H1 (cell line): ENCODE measurements at regions of chr3 and their contacts with region 1.

Region 1: DNA sequence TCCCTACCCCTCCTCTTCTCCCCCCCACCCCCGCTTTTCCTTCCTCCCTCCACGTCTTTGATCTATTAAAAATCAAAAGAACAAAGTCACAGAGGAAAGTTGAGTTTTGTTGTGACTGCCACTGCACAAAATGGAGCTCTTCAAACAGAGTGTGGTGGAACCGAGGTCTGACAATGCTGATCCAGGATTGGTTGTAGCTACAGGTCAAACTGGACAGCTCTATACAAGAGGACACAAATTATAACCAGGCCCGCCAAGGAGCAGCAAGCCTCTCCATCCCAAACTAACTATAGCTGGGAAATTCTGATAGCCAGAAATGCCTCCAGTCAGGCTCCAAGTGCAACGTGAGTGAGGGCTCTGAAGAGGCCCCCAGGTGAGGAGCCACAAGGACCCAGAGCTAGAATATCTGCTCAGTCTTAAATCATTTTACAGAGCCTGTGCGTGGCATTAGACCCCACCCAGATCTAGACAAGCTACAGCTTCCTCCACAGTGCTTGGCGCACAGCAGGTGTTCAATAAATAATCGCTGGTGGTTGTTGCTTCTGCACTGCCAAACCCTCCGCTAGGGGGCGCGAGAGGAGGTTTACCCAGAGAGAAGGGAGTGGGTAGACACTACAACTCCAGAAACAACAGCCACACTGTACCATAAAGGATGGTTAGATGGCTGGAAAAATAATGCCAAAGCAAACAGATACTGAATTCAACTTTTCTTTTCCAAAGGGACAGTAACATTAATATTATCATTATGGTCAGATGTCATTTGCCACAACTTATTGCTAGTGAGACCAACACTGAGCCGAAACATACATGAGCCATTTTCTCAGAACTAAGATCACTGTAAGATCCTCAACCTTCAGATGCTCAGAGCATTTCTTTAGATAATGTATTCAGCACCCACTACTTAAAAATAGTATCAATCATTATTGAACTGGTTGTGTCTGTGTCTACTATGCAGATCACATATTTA is 44.6 kb downstream of the ZIC4 start:
- DNase-seq: peak in 1 of 2 experiments; percentile 99
- H3K4me3 ChIP-seq: peak overlapping the region in 2 of 4 experiments; percentile 14 to 48; a peak in 4 of 8 replicates
- H3K27ac ChIP-seq: no peak overlapping the region
- H3K4me1 ChIP-seq: peaks cover 10 to 25% (median 14%) of the 10 kb centered on the region in 4 experiments
- H3K27me3 ChIP-seq: peaks cover 44 to 75% (median 71%) of the 10 kb centered on the region in 4 experiments
- CTCF ChIP-seq: peak; percentile 78 to 88 (median 82)
- EP300 ChIP-seq: no peak
- POLR2A ChIP-seq: no peak
- RAD21 ChIP-seq: peak; percentile 64 to 65

Region 2: DNA sequence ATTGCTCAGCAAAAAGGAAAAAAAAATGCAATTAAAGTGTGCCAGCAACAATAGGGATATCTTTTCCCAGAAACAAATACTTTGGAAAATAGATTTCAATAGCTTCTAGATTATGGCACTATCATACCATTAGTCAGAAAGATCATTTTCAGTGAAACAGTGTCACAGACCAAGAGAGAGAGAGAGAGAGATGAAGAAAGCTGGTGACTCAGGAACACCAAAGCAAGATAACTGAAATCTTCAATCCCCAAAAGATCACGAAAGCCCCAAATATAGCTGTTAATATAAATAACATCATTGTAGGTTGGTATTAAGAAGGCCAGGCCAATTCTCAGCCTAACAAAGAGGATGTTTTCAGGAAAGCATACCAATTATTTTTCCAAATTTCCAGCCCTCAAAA is 12.8 kb before region 1 on chr3:
- CTCF ChIA-PET with region 1: interaction called, 14 read pairs
- POLR2A ChIA-PET with region 1: interaction called, 3 read pairs
- DNase-seq: no peak
- H3K4me3 ChIP-seq: no peak overlapping the region
- H3K27ac ChIP-seq: no peak overlapping the region
- H3K4me1 ChIP-seq: no peaks in the 10 kb centered on the region
- H3K27me3 ChIP-seq: no peaks in the 10 kb centered on the region; a peak in 2 of 7 replicates
- CTCF ChIP-seq: no peak
- EP300 ChIP-seq: no peak
- POLR2A ChIP-seq: no peak
- RAD21 ChIP-seq: no peak

Region 3: GRCh38 chr3:147383617-147384016 is 21.9 kb after region 1 on chr3:
- CTCF ChIA-PET with region 1: interaction called, 162 read pairs
- POLR2A ChIA-PET with region 1: interaction called, 3 read pairs
- DNase-seq: peak in 1 of 2 experiments; percentile 48
- H3K4me3 ChIP-seq: no peak overlapping the region
- H3K27ac ChIP-seq: no peak overlapping the region
- H3K4me1 ChIP-seq: peaks cover 16 to 41% (median 33%) of the 10 kb centered on the region in 4 experiments
- H3K27me3 ChIP-seq: peaks cover 60 to 87% (median 79%) of the 10 kb centered on the region in 4 experiments
- CTCF ChIP-seq: peak; percentile 60 to 77 (median 75)
- EP300 ChIP-seq: no peak
- POLR2A ChIP-seq: no peak
- RAD21 ChIP-seq: peak; percentile 74 to 77

Region 4: GRCh38 chr3:147397155-147397874 is 35.6 kb after region 1 on chr3:
- CTCF ChIA-PET with region 1: interaction called, 91 read pairs
- POLR2A ChIA-PET with region 1: interaction called, 3 read pairs
- DNase-seq: peak in 1 of 2 experiments; percentile 83
- H3K4me3 ChIP-seq: peak overlapping the region; percentile 36 to 68 (median 52)
- H3K27ac ChIP-seq: no peak overlapping the region
- H3K4me1 ChIP-seq: peaks cover 8 to 43% (median 22%) of the 10 kb centered on the region in 4 experiments
- H3K27me3 ChIP-seq: peaks cover 44 to 85% (median 78%) of the 10 kb centered on the region in 4 experiments
- CTCF ChIP-seq: peak in 1 of 3 experiments; percentile 45; a peak in 1 of 4 replicates
- EP300 ChIP-seq: no peak
- POLR2A ChIP-seq: peak in 1 of 2 experiments; percentile 67; a peak in 2 of 3 replicates
- RAD21 ChIP-seq: peak; percentile 4 to 28; a peak in 1 of 4 replicates

Region 5: DNA sequence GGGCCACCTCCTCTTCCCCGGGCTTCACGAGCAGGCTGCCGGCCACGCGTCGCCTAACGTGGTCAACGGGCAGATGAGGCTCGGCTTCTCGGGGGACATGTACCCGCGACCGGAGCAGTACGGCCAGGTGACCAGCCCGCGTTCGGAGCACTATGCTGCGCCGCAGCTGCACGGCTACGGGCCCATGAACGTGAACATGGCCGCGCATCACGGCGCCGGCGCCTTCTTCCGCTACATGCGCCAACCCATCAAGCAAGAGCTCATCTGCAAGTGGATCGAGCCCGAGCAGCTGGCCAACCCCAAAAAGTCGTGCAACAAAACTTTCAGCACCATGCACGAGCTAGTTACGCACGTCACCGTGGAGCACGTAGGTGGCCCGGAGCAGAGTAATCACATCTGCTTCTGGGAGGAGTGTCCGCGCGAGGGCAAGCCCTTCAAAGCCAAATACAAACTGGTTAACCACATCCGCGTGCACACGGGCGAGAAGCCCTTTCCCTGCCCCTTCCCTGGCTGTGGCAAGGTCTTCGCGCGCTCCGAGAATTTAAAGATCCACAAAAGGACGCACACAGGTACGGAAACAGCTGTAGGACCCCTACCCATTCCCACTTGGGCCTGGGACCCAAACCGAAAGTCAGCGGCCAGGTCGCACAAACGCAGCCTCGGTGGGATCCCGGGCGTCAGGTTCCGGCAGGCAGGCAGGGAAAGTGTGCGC is 48.9 kb after region 1 on chr3:
- CTCF ChIA-PET with region 1: interaction called, 19 read pairs
- POLR2A ChIA-PET with region 1: interaction called, 3 read pairs
- DNase-seq: peak in 1 of 2 experiments; percentile 71
- H3K4me3 ChIP-seq: peak overlapping the region; percentile 20 to 62 (median 38); a peak in 6 of 8 replicates
- H3K27ac ChIP-seq: no peak overlapping the region
- H3K4me1 ChIP-seq: peaks cover 0 to 41% (median 25%) of the 10 kb centered on the region in 4 experiments; a peak in 6 of 7 replicates
- H3K27me3 ChIP-seq: peaks cover 64 to 98% (median 90%) of the 10 kb centered on the region in 4 experiments
- CTCF ChIP-seq: no peak
- EP300 ChIP-seq: no peak
- POLR2A ChIP-seq: no peak
- RAD21 ChIP-seq: no peak